ENCODE measurements at regions of chr14 and their contacts with region 1.

Region 1: DNA sequence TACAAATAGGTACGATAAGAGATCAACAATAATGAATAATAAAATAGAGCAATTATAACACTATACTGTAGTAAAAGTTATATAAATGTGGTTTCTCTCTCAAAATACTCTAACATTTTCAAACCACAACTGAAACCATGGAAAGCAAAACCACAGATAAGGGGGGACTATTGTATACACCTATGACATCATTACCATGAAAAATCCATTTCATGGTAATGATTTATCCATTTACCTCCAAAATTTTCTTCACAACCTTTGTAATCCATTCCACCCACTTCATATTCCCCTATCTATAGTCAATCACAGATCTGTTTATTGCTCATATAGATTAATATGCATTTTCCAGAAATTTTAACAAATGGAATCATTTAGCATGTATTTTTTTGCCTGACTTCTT is 163.9 kb upstream of the G2E3 start:
- DNase-seq: no peak
- ATAC-seq: no peak
- H3K4me3 ChIP-seq: no peak overlapping the region
- H3K27ac ChIP-seq: no peak overlapping the region
- H3K4me1 ChIP-seq: no peaks in the 10 kb centered on the region
- H3K27me3 ChIP-seq: no peaks in the 10 kb centered on the region
- CTCF ChIP-seq: no peak

Region 2: GRCh38 chr14:30834353-30834752 is 439.3 kb after region 1 on chr14:
- CTCF ChIA-PET with region 1: no interaction called
- POLR2A ChIA-PET with region 1: interaction called, 18 read pairs
- in situ Hi-C with region 1: no loop called
- intact Hi-C with region 1: no loop called
- DNase-seq: no peak
- ATAC-seq: no peak
- H3K4me3 ChIP-seq: no peak overlapping the region
- H3K27ac ChIP-seq: no peak overlapping the region
- H3K4me1 ChIP-seq: no peaks in the 10 kb centered on the region
- H3K27me3 ChIP-seq: no peaks in the 10 kb centered on the region
- CTCF ChIP-seq: no peak